ENCODE measurements at regions of chr19 and their contacts with region 1.

Region 1: DNA sequence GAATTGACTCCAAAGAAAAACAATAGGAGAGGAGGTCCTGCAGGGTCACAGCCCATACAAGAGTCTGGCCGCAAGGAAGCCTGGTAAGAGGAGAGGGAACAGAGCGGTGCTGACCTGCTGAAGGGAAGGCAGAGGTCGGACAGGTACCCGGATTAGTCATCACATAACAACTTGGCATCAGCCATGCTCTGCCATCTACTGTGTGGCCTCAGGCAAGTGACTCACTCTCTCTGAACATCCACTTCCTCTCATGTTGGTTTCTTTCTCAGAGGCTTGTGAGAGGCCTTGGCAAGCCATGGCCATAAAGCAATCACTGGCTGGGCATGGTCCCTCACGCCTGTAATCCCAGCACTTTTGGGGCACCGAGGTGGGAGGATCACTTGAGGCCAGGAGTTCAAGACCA is 7.4 kb upstream of the CAPNS1 start:
- DNase-seq: peak; percentile 76
- ATAC-seq: peak; percentile 78
- H3K4me3 Mint-ChIP-seq: no peak overlapping the region
- H3K27ac Mint-ChIP-seq: peak overlapping the region; percentile 65
- H3K4me1 Mint-ChIP-seq: peaks cover 28% of the 10 kb centered on the region
- H3K27me3 Mint-ChIP-seq: peaks cover 1% of the 10 kb centered on the region
- CTCF ChIP-seq: no peak

Region 2: DNA sequence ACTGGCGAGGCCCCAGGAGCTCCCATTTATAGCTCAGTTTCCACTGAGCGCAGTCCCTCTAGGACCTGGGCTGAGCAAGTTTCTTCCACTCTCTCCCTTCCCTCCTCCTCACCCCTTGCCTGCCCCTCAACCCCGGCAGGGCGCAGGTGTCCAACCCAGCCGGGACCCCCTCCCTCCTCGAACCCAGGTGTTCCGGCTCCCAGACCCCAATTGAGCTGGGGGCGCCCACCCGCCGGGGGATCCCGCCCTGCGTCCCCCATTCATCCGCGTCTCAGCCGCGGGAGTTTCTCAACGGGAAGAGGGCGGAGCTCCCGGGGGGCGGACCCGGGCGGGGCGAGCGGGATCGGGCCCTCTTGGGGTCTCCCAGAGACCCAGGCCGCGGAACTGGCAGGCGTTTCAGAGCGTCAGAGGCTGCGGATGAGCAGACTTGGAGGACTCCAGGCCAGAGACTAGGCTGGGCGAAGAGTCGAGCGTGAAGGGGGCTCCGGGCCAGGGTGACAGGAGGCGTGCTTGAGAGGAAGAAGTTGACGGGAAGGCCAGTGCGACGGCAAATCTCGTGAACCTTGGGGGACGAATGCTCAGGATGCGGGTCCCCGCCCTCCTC is 275.8 kb before region 1 on chr19 and contains the start of gene KIRREL2:
- CTCF ChIA-PET with region 1: no interaction called
- POLR2A ChIA-PET with region 1: no interaction called
- intact Hi-C with region 1: no loop called
- DNase-seq: peak; percentile 50
- ATAC-seq: peak; percentile 65
- H3K4me3 Mint-ChIP-seq: peak within 1 kb of the TSS; percentile 71
- H3K27ac Mint-ChIP-seq: no peak within 1 kb of the TSS
- H3K4me1 Mint-ChIP-seq: peaks cover 9% of the 10 kb centered on the region
- H3K27me3 Mint-ChIP-seq: peaks cover 47% of the 10 kb centered on the region
- CTCF ChIP-seq: no peak
- total RNA-seq, gene KIRREL2: 1.4 TPM

Region 3: DNA sequence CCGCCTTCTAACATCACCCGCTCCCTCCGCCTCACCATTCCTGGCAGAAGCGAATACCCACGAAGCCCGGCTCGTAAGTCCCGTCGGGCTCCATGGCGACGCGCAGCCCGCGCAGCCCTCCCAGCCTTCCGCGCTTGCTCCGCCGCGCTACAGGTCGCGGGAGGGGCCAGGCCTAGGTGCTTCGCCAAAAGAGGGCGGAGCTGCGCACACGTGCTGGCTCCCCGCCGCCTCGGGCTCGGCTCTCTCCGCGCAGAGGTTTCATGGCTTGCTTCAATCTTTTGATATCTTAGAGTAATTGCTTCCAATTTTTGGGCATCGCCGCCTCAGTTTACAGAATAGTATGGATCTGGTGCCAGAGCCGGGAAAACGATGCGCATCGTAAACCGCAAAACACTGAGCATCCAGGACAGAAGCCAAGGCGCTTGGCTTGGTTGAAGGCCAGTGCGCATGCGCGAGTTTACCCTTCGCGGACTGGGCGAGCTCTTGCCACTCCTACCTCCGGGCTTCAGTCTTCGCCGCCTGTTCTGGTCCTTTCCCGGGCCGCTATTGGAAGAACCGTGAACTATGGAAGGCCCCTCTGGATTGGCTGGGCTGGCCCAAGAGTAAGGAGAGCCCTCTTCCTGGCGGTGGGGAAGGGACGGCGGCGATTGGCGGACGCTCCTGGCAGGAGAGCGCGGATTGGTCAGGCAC is 17.6 kb before region 1 on chr19 and contains the start of gene POLR2I:
- CTCF ChIA-PET with region 1: interaction called, 42 read pairs
- POLR2A ChIA-PET with region 1: interaction called, 3 read pairs
- intact Hi-C with region 1: no loop called
- DNase-seq: peak; percentile 99
- ATAC-seq: peak; percentile 93
- H3K4me3 Mint-ChIP-seq: peak within 1 kb of the TSS; percentile 92
- H3K27ac Mint-ChIP-seq: peak within 1 kb of the TSS; percentile 89
- H3K4me1 Mint-ChIP-seq: peaks cover 26% of the 10 kb centered on the region
- H3K27me3 Mint-ChIP-seq: no peaks in the 10 kb centered on the region
- CTCF ChIP-seq: no peak
- total RNA-seq, gene POLR2I: 68.4 to 76.5 TPM

Region 4: DNA sequence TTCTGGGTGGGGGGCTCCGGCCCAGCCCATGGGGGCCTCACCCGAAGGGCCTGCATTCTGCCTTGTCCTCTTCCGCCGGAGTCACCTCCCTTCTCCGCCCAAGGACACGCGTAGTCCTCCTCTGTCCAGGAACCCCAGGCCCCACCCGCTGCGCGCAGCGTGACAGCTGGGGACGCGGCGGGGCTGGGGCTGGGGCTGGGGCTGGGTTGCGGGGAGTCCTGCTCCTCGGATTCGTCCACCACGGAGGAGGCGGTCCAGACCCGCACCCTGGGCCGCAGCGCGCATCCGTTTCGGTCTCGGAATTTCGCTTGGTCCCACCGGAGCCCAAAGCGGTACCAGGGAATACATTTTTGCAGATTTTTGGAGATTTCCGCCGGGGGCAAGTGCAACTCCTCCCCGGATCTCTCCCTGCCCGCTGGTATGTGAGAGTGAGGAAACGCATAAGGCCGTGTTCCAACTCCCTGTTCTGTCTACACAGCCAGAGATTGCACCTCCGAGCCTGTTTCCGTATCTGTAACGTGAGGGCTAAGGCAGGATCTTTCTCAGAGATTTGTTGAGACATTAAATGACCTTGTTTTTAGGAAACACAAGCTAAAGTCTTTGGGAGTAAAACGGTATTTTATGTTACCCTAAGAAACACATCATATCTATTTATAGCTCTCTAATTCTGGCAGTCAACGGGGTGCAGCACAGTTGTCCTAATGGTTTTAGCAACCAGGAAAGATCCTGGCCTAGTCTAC is 20.0 kb after region 1 on chr19 and contains the start of gene COX7A1:
- CTCF ChIA-PET with region 1: interaction called, 12 read pairs
- POLR2A ChIA-PET with region 1: interaction called, 4 read pairs
- intact Hi-C with region 1: no loop called
- DNase-seq: no peak
- ATAC-seq: no peak
- H3K4me3 Mint-ChIP-seq: no peak within 1 kb of the TSS
- H3K27ac Mint-ChIP-seq: no peak within 1 kb of the TSS
- H3K4me1 Mint-ChIP-seq: no peaks in the 10 kb centered on the region
- H3K27me3 Mint-ChIP-seq: no peaks in the 10 kb centered on the region
- CTCF ChIP-seq: no peak
- total RNA-seq, gene COX7A1: not detected

Region 5: GRCh38 chr19:36163813-36164212 is 31.3 kb after region 1 on chr19:
- CTCF ChIA-PET with region 1: interaction called, 139 read pairs
- POLR2A ChIA-PET with region 1: no interaction called
- intact Hi-C with region 1: no loop called
- DNase-seq: no peak
- ATAC-seq: no peak
- H3K4me3 Mint-ChIP-seq: no peak overlapping the region
- H3K27ac Mint-ChIP-seq: no peak overlapping the region
- H3K4me1 Mint-ChIP-seq: no peaks in the 10 kb centered on the region
- H3K27me3 Mint-ChIP-seq: no peaks in the 10 kb centered on the region
- CTCF ChIP-seq: no peak

Region 6: DNA sequence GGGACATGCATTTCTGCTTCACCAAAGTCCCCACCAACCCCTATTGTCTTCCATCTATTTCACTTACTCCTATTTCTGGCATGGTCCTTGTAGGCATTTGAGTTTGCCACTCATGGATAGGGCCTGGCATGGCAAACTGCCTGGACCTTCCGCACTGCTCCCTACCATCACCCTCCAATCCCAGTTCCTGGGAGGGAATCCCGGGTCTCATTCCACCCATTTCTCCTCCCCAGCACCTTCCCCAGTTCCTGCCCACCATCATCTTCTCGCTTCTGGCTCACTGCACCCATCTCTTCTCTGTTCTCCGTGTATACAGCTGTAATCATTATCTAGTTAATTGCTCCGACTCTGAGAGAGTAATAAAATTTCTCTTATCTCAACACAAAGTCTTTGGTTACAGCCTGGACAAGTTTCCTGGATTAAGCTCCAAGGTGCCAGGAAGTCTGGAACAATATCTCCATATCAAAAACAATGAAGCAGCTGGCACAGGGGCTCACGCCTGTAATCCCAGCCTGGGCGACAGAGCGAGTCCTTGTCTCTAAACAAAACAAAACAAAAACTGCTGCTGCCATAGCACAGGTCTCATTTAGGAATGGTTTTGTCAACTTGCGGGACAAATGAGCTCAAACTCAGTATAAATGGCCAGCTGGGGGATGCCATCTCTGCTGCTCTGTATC is 36.7 kb after region 1 on chr19:
- CTCF ChIA-PET with region 1: interaction called, 139 read pairs
- POLR2A ChIA-PET with region 1: interaction called, 9 read pairs
- intact Hi-C with region 1: loop called (anchors 1 kb)
- DNase-seq: no peak
- ATAC-seq: no peak
- H3K4me3 Mint-ChIP-seq: no peak overlapping the region
- H3K27ac Mint-ChIP-seq: no peak overlapping the region
- H3K4me1 Mint-ChIP-seq: peaks cover 4% of the 10 kb centered on the region
- H3K27me3 Mint-ChIP-seq: no peaks in the 10 kb centered on the region
- CTCF ChIP-seq: no peak

Region 7: DNA sequence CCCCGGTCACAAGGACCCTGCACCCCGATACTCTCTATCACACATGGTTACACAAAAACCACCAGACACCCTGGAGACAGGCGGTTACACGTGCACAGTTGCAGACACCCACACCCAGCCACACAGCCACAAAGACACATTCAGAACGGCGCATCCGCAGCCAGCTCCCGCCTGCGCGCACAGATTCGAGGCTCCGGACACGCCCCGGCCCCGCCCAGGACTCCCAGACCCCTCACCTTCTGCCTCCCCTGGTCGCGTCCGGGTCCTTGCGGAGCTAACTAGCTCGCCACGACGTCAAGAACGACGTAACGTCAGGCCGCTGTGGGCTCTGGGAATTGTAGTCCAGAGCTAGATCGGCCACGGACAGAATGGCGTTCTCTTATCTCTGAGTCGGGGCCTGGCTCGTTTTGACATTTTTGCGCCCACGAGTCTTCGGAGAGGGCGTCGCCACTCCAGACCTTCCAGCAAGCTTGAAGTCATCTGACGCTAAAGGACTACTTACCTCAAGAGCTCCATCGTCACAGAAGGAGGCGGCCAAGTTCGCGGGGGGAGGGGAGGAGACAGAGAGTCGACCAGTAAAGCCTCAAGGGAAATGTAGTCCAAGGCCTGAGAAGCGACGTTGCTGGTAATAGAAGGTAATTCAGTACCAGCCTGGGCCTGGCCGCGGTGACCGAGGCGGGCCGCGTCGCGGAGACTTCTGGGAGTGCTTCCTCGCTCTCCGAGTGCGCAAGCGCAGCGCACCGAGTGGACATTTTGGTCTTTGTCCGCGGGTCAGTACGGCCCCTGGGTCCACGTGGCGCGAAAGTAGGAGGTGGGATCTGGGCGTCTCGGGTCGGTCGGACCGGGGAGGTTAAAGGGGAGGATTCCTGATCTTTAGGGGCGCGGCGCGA is 82.1 kb after region 1 on chr19 and contains the starts of genes ZNF146 and ZNF565:
- CTCF ChIA-PET with region 1: interaction called, 12 read pairs
- POLR2A ChIA-PET with region 1: interaction called, 3 read pairs
- intact Hi-C with region 1: no loop called
- DNase-seq: peak; percentile 99
- ATAC-seq: peak; percentile 89
- H3K4me3 Mint-ChIP-seq: no peak within 1 kb of the TSS
- H3K27ac Mint-ChIP-seq: no peak within 1 kb of the TSS
- H3K4me1 Mint-ChIP-seq: peaks cover 24% of the 10 kb centered on the region
- H3K27me3 Mint-ChIP-seq: no peaks in the 10 kb centered on the region
- CTCF ChIP-seq: no peak
- total RNA-seq, gene ZNF146: 102 to 109 TPM
- total RNA-seq, gene ZNF565: 1.3 to 1.6 TPM